Activated naive CD4-positive, alpha-beta T cell treated with anti-CD3 and anti-CD28 coated beads for 36 hours (primary cell): ENCODE measurements at regions of chr15 and their contacts with region 1.

Region 1: DNA sequence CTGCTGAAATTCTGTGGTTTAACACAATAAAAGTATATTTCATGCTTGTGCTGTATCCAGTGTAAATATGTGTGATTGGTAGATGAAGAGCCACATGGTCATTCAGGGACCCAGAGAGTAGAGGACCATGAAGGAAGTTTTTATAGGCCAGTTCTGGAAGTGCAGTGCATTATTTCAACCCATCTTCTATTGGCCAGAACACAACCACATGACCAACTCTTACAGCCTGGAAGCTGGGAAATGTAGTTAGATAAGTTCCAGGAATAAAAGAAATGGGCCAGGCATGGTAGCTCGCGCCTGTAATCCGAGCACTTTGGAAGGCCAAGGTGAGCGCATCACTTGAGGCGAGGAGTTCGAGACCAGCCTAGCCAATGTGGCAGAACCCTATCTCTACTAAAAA is 21.4 kb upstream of the PRTG start:
- DNase-seq: no peak
- H3K4me3 Mint-ChIP-seq: no peak overlapping the region
- H3K27ac Mint-ChIP-seq: no peak overlapping the region
- H3K4me1 Mint-ChIP-seq: no peaks in the 10 kb centered on the region
- H3K27me3 Mint-ChIP-seq: peaks cover 3% of the 10 kb centered on the region

Region 2: GRCh38 chr15:55026381-55026780 is 738.0 kb before region 1 on chr15:
- CTCF ChIA-PET with region 1: no interaction called
- intact Hi-C with region 1: no loop called
- DNase-seq: no peak
- H3K4me3 Mint-ChIP-seq: no peak overlapping the region
- H3K27ac Mint-ChIP-seq: no peak overlapping the region
- H3K4me1 Mint-ChIP-seq: no peaks in the 10 kb centered on the region
- H3K27me3 Mint-ChIP-seq: peaks cover 19% of the 10 kb centered on the region

Region 3: GRCh38 chr15:55742927-55743728 is 21.3 kb before region 1 on chr15 and contains the start of gene PRTG:
- CTCF ChIA-PET with region 1: no interaction called
- intact Hi-C with region 1: no loop called
- DNase-seq: no peak
- H3K4me3 Mint-ChIP-seq: peak within 1 kb of the TSS; percentile 61
- H3K27ac Mint-ChIP-seq: no peak within 1 kb of the TSS
- H3K4me1 Mint-ChIP-seq: peaks cover 3% of the 10 kb centered on the region
- H3K27me3 Mint-ChIP-seq: peaks cover 25% of the 10 kb centered on the region
- total RNA-seq, gene PRTG: not detected

Region 4: DNA sequence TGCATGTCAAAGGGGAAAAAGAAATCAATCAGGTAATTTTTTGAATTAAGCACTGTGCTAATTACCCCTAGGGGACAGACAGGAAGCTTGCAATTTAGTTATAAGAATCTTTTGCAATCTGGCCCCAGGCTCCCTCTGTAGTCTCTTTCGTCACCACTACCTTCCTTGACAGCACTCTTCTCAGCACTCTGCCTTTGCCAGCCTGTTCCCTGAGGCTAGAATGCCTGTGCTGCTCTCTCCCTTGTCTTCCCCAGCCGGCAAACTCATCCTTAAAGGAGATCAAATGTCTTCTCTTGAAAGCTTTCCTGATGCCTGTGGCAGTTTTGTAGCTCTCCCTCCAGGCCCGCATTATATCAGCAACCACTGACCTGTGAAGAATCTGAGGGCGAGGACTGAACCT is 10.9 kb after region 1 on chr15:
- CTCF ChIA-PET with region 1: interaction called, 13 read pairs
- intact Hi-C with region 1: no loop called
- DNase-seq: no peak
- H3K4me3 Mint-ChIP-seq: no peak overlapping the region
- H3K27ac Mint-ChIP-seq: no peak overlapping the region
- H3K4me1 Mint-ChIP-seq: no peaks in the 10 kb centered on the region
- H3K27me3 Mint-ChIP-seq: peaks cover 20% of the 10 kb centered on the region